H1 (cell line): ENCODE measurements at regions of chr9 and their contacts with region 1.

Region 1: DNA sequence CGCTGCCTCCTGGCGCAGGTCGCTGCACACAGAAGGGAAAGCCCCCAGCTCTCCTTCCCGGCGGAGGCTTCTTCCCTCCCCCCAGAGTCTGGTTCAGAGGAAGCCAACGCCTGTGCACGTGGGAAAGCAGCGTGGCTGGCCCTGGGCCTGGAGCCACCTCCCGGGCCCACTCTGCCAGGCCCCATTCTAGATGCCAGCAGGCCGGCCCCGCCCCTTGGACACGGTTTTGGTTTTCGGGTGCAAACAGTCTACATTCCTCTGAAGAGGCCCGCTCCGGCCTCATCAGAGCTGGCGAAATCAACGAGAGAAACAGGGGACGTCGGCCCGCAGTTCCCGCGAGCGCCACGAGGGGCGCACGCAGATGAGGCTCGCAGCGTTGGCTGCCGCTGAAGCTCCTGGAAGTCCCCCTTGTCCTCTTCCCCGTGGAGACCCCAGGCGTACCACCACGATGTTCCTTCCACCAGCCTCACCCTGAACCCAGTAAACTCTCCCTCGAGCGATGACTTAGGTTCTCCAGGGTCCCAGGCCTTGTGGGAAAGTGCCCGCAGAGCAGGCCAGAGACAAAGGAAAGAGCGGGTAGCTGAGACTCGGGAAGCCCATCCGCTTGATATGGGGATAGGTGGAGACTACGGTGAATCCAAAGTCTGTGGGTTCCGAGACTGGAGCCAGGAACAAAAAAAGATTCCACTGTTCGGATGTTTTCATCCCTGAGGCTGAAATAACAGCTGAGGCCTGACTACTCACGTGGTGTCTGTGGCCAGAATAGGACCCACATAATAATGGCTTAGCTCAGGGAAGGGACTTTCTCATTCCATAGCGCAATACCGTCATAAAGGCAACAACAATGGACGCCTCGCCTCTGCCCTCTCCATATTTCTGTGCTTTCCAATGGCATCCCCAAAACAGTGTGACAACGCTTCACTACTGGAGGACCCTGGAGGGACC is 64.2 kb downstream of the KLF4 start:
- DNase-seq: peak; percentile 54 to 95
- H3K4me3 ChIP-seq: peak overlapping the region in 1 of 4 experiments; percentile 19; a peak in 3 of 8 replicates
- H3K27ac ChIP-seq: no peak overlapping the region
- H3K4me1 ChIP-seq: no peaks in the 10 kb centered on the region; a peak in 1 of 7 replicates
- H3K27me3 ChIP-seq: peaks cover 0 to 8% (median 7%) of the 10 kb centered on the region in 4 experiments; a peak in 3 of 7 replicates
- CTCF ChIP-seq: peak; percentile 69 to 98 (median 92)
- EP300 ChIP-seq: no peak
- POLR2A ChIP-seq: no peak
- RAD21 ChIP-seq: peak; percentile 59 to 64

Region 2: DNA sequence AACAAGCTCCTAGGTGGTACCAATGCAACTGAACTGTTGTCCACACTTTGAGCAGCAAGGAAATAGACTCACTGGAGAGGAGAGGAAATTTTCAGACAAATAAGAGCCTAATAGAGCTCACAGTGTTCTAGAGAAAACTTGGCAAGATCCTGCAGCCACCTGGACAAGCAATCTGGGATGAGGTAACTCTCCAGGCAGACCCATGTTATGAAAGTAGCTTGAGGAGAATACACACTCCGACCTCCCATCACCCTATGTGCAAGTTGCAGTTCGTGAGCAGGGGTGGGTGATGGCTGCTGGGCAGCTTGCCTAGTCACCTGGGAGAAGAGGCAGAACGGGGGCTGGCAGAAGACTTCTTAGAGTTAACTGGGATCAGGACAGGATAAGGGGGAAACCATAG is 38.0 kb before region 1 on chr9:
- CTCF ChIA-PET with region 1: interaction called, 13 read pairs
- POLR2A ChIA-PET with region 1: no interaction called
- DNase-seq: no peak
- H3K4me3 ChIP-seq: no peak overlapping the region
- H3K27ac ChIP-seq: no peak overlapping the region
- H3K4me1 ChIP-seq: no peaks in the 10 kb centered on the region
- H3K27me3 ChIP-seq: no peaks in the 10 kb centered on the region
- CTCF ChIP-seq: no peak
- EP300 ChIP-seq: no peak
- POLR2A ChIP-seq: no peak
- RAD21 ChIP-seq: no peak

Region 3: GRCh38 chr9:107443786-107444185 is 18.4 kb after region 1 on chr9:
- CTCF ChIA-PET with region 1: interaction called, 50 read pairs
- POLR2A ChIA-PET with region 1: interaction called, 6 read pairs
- DNase-seq: no peak
- H3K4me3 ChIP-seq: no peak overlapping the region
- H3K27ac ChIP-seq: no peak overlapping the region
- H3K4me1 ChIP-seq: peaks cover under 1 to 4% (median 2%) of the 10 kb centered on the region in 4 experiments; a peak in 4 of 7 replicates
- H3K27me3 ChIP-seq: no peaks in the 10 kb centered on the region
- CTCF ChIP-seq: no peak
- EP300 ChIP-seq: no peak
- POLR2A ChIP-seq: no peak
- RAD21 ChIP-seq: no peak

Region 4: GRCh38 chr9:107472581-107473340 is 47.4 kb after region 1 on chr9:
- CTCF ChIA-PET with region 1: interaction called, 17 read pairs
- POLR2A ChIA-PET with region 1: interaction called, 3 read pairs
- DNase-seq: no peak
- H3K4me3 ChIP-seq: no peak overlapping the region
- H3K27ac ChIP-seq: no peak overlapping the region
- H3K4me1 ChIP-seq: peaks cover 0 to 4% (median 2%) of the 10 kb centered on the region in 4 experiments; a peak in 1 of 7 replicates
- H3K27me3 ChIP-seq: no peaks in the 10 kb centered on the region
- CTCF ChIP-seq: no peak
- EP300 ChIP-seq: no peak
- POLR2A ChIP-seq: no peak
- RAD21 ChIP-seq: no peak

Region 5: DNA sequence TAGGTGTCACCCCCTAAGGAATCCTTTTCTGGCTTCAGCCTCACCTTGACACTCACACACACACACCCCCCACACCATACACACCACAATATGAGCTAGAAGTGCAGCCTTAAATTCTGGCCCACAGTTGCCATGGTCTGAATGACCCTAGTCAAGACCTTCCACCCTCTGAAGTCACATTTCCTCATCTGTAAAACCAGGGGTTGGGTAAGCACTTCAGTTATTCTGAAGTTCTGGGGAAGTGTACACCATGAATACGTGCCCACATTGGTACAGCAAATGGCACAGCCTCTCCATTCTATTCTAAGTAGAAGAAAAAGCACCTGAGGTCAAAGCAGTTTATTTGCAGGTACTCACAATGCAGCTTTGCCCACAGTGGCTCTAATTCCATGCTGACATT is 436.9 kb after region 1 on chr9:
- CTCF ChIA-PET with region 1: interaction called, 14 read pairs
- POLR2A ChIA-PET with region 1: no interaction called
- DNase-seq: no peak
- H3K4me3 ChIP-seq: no peak overlapping the region
- H3K27ac ChIP-seq: no peak overlapping the region
- H3K4me1 ChIP-seq: no peaks in the 10 kb centered on the region
- H3K27me3 ChIP-seq: no peaks in the 10 kb centered on the region
- CTCF ChIP-seq: no peak
- EP300 ChIP-seq: no peak
- POLR2A ChIP-seq: no peak
- RAD21 ChIP-seq: no peak

Region 6: GRCh38 chr9:108761655-108762347 is 1336.4 kb after region 1 on chr9:
- CTCF ChIA-PET with region 1: interaction called, 13 read pairs
- POLR2A ChIA-PET with region 1: no interaction called
- DNase-seq: peak; percentile 21 to 71
- H3K4me3 ChIP-seq: no peak overlapping the region
- H3K27ac ChIP-seq: no peak overlapping the region
- H3K4me1 ChIP-seq: 0 out of 7 replicates have a peak, but pooled peaks cover 0 to 1% (median 0%) of the 10 kb centered on the region in 4 experiments
- H3K27me3 ChIP-seq: no peaks in the 10 kb centered on the region
- CTCF ChIP-seq: peak; percentile 71 to 84 (median 82)
- EP300 ChIP-seq: no peak
- POLR2A ChIP-seq: no peak
- RAD21 ChIP-seq: peak; percentile 90 to 92